GM13976 (cell line): ENCODE measurements at regions of chr2 and their contacts with region 1.

Region 1: DNA sequence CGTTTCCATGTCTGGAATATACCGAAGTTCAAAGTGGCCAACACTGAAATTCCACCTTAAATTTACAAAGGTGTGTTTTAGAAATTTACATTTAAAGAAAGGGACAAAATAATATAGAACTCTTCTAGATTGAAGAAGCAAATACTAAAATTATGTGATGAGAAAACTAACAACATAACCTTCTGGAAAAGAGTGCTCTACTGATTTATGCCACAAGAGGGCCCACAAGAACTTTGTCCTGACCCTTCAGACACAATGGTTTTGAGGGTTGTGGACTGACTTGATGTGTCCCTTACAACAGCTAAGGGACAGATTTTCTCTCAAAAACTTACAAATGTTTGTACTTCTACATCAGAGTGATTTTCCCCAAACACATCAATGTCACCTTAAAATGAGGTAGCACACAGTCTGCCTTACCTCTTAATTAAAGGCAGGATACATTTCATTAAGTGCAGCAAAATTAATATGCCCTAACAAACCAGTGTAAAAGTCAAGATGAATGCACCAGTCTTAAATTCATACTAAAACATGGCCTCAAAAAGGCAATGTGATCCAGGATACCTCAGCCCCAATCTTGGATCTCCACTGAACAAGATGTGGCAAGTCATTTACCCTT is 36.2 kb downstream of the EIF2AK3 start:
- DNase-seq: peak; percentile 36
- CTCF ChIP-seq: peak; percentile 56

Region 2: GRCh38 chr2:88880441-88880953 is 289.4 kb after region 1 on chr2:
- in situ Hi-C with region 1: loop called (anchors 25 kb)
- DNase-seq: no peak
- CTCF ChIP-seq: peak; percentile 43